ENCODE measurements at regions of chr6 and their contacts with region 1.

Region 1: GRCh38 chr6:143842902-143843676 is at the start of gene LTV1:
- DNase-seq: peak; percentile 96
- H3K4me3 ChIP-seq: peak within 1 kb of the TSS; percentile 55 to 59
- H3K27ac ChIP-seq: peak within 1 kb of the TSS; percentile 93
- H3K4me1 ChIP-seq: peaks cover 5% of the 10 kb centered on the region
- H3K27me3 ChIP-seq: no peaks in the 10 kb centered on the region
- CTCF ChIP-seq: peak in 2 of 4 experiments; percentile 19 to 34
- POLR2A ChIP-seq: peak; percentile 38
- total RNA-seq, gene LTV1: 7.8 to 14.4 TPM

Region 2: GRCh38 chr6:143575440-143575839 is 267.6 kb before region 1 on chr6:
- intact Hi-C with region 1: loop called (anchors 5 kb)
- DNase-seq: peak; percentile 66
- H3K4me3 ChIP-seq: no peak overlapping the region
- H3K27ac ChIP-seq: no peak overlapping the region
- H3K4me1 ChIP-seq: no peaks in the 10 kb centered on the region
- H3K27me3 ChIP-seq: no peaks in the 10 kb centered on the region
- CTCF ChIP-seq: peak; percentile 72 to 91 (median 86)
- POLR2A ChIP-seq: no peak

Region 3: DNA sequence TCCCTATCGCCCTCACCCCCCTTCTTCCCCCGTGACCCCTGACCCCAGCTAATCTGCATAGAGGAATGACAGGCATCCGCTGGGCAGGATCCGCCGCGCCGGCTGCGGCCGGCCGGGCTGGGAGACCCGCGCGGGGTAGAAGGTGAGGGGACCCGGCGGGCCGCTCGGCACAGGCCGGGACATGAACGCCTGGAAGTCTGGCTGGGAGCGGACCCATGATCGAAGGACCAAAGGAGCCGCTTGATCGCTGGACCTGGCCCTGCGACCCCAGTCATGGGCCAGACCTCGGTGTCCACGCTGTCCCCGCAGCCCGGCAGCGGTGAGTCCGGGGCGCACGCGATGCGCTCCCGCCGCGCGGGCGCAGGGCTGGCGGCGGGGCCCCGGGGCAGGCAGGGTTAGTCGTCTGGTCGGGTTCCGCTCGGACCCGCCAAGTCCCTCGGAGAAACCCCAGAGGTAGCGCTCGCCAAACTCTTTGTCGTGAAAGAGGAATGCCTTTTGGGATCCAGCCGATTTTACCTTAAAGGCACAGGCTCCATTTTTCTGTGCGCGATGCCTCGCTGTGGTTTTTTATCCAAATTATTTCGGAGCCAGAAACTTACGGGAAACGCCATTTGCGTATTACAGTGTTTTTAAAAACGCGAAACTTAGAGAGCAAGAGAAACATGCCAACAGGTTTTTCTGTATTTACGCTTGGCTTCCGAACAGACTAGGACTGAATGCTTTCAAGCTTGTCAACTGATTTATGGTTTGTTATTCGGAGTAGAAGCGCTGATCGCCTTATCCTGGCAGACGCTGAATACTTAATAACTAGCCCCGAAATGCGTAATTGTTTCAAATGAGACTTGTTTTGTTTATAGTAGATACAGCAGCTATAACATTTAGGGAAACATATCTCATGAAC is 164.9 kb before region 1 on chr6 and contains the start of gene PHACTR2:
- intact Hi-C with region 1: loop called (anchors 5 kb)
- DNase-seq: peak; percentile 52
- H3K4me3 ChIP-seq: peak within 1 kb of the TSS; percentile 68 to 82
- H3K27ac ChIP-seq: peak within 1 kb of the TSS; percentile 87 to 97
- H3K4me1 ChIP-seq: no peaks in the 10 kb centered on the region
- H3K27me3 ChIP-seq: no peaks in the 10 kb centered on the region
- CTCF ChIP-seq: no peak
- POLR2A ChIP-seq: peak; percentile 72
- total RNA-seq, gene PHACTR2: 41.4 to 108 TPM

Region 4: DNA sequence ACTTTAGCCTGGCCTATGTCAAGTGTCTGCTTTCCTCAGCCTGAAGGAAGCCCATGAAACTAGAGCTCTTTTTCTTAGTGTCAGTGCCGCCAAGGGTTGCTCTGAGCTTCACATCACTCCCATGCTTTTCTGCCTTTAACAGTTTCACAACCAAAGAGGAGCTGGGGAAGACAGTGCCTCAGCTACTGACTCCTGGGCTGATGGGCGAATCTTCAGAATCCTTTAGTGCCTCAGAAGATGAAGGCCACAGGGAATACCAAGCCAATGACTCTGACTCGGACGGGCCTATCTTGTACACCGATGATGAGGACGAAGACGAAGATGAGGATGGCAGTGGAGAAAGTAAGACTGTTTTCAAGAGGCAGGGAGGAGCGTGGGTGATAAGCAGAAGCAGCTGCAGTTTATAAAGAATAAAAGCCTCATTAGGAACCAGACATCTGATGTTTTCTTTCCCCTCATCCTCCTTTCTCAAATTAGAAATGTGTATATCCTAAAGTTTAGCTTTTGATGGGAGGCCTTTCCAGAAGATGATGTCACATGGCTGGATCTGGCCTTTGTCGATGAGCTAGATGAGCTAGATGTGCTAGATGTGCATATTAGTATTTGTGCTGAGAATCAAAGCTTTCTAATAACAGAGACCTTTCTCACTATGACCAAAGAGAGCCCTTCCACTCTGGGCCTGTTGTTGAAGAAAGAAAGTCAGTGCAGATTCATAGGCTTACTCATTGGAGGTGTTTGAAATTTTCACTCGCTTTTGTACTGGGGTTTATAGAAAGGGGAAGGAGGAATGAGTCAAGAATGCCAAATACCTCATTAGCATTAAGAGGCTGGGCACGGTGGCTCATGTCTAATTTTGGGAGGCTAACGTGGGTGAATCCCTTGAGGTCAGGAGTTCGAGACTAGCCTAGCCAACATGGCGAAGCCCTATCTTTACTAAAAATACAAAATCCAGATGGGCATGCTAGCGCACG is 70.7 kb before region 1 on chr6:
- intact Hi-C with region 1: loop called (anchors 5 kb)
- DNase-seq: no peak
- H3K4me3 ChIP-seq: no peak overlapping the region
- H3K27ac ChIP-seq: peak overlapping the region in 1 of 2 donors; percentile 32
- H3K4me1 ChIP-seq: no peaks in the 10 kb centered on the region
- H3K27me3 ChIP-seq: no peaks in the 10 kb centered on the region
- CTCF ChIP-seq: no peak
- POLR2A ChIP-seq: no peak

Region 5: DNA sequence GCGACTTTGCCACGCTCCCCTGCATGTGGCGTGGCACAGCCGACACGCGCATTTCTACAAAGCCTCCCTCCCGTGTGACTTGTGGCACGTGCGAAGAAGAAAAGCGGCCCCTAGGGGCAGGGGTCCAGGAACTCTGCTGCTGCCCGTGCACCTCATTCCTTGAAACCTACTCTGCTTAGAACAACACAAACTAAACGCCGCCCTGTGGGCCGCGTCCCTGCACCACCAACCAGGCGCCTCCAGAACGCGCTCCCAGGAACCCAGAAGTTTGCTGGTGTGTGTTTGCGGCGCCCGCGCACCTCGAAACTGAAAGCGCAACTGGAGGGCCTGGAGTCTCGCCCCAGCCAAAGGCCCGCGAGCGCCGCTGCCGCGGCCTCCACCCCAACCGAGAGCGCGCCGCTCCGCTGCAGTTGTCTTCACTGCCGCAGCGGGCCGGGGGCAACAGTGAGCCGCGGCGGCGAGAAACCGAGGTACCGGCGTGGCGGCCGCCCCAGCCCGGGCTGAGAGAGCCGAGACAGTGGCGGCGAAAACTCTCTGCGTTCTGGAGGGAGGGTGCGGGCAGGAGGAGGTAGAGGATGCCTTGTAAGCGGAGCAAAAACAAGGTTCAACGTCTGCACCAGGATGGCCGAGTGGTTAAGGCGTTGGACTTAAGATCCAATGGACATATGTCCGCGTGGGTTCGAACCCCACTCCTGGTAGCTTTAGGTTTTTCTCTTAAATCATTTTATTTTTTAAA is 373.0 kb after region 1 on chr6:
- intact Hi-C with region 1: loop called (anchors 10 kb)
- DNase-seq: peak; percentile 96
- H3K4me3 ChIP-seq: peak overlapping the region; percentile 52 to 58
- H3K27ac ChIP-seq: peak overlapping the region; percentile 93 to 95
- H3K4me1 ChIP-seq: peaks cover 6% of the 10 kb centered on the region
- H3K27me3 ChIP-seq: no peaks in the 10 kb centered on the region
- CTCF ChIP-seq: peak; percentile 50 to 84 (median 67)
- POLR2A ChIP-seq: peak; percentile 45